ENCODE measurements at regions of chr3 and their contacts with region 1.

Region 1: DNA sequence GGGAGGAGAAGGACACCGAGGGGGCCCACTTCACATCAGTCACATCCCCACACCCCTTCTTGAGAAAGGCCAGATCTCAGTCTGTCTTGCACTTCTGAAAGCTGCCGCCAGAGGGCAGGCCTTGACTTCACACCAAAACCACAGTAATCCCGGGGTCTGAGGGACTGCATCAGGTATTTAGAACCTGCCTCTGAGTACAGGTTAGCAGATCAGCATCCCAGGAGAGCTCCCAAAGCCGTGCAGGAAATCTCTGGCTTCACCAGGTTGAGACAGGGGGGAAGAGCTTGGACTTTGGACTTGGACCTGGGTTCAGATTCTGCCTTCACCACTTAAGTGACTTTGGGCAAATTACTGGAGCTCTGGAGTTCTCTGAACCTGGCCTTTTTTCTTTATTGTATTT is 50.3 kb downstream of the LHFPL4 start:
- DNase-seq: peak; percentile 71
- ATAC-seq: peak; percentile 67
- H3K4me3 ChIP-seq: no peak overlapping the region
- H3K27ac ChIP-seq: no peak overlapping the region
- H3K4me1 ChIP-seq: peaks cover 15 to 27% of the 10 kb centered on the region in 2 experiments
- H3K27me3 ChIP-seq: no peaks in the 10 kb centered on the region
- CTCF ChIP-seq: peak; percentile 77 to 96 (median 93)
- POLR2A ChIP-seq: no peak
- RAD21 ChIP-seq: peak; percentile 93

Region 2: DNA sequence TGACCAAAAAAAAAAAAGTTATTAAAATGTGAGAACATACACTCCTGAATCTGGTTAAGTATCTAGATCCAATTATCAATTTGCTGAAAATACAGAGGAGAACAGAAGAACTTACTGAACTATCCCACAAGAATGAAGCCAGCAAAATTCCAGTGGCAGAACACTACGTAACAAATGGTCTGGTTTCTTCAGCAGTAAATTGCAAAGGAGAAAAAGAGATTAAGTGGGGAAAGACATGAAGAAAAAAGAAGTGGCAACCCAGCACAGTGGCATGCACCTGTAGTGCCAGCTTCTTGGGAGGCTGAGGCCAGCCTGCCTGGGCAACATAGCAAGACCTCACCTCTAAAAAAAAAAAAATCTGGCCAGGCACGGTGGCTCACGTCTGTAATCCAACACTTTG is 11.8 kb before region 1 on chr3:
- CTCF ChIA-PET with region 1: interaction called, 12 read pairs
- POLR2A ChIA-PET with region 1: no interaction called
- RAD21 ChIA-PET with region 1: no interaction called
- intact Hi-C with region 1: no loop called
- DNase-seq: no peak
- ATAC-seq: no peak
- H3K4me3 ChIP-seq: no peak overlapping the region
- H3K27ac ChIP-seq: no peak overlapping the region
- H3K4me1 ChIP-seq: no peaks in the 10 kb centered on the region
- H3K27me3 ChIP-seq: no peaks in the 10 kb centered on the region
- CTCF ChIP-seq: no peak
- POLR2A ChIP-seq: no peak
- RAD21 ChIP-seq: no peak

Region 3: GRCh38 chr3:9550999-9551398 is 47.7 kb after region 1 on chr3:
- CTCF ChIA-PET with region 1: no interaction called
- POLR2A ChIA-PET with region 1: no interaction called
- RAD21 ChIA-PET with region 1: no interaction called
- intact Hi-C with region 1: no loop called
- DNase-seq: no peak
- ATAC-seq: no peak
- H3K4me3 ChIP-seq: no peak overlapping the region
- H3K27ac ChIP-seq: no peak overlapping the region
- H3K4me1 ChIP-seq: no peaks in the 10 kb centered on the region
- H3K27me3 ChIP-seq: peaks cover 30% of the 10 kb centered on the region
- CTCF ChIP-seq: no peak
- POLR2A ChIP-seq: no peak
- RAD21 ChIP-seq: no peak

Region 4: GRCh38 chr3:9649791-9650521 is 146.7 kb after region 1 on chr3:
- CTCF ChIA-PET with region 1: interaction called, 3 read pairs
- POLR2A ChIA-PET with region 1: no interaction called
- RAD21 ChIA-PET with region 1: no interaction called
- intact Hi-C with region 1: loop called (anchors 10 kb)
- DNase-seq: no peak
- ATAC-seq: peak; percentile 7
- H3K4me3 ChIP-seq: peak overlapping the region; percentile 92 to 98
- H3K27ac ChIP-seq: peak overlapping the region; percentile 44; the same call in 1 of the 2 replicates
- H3K4me1 ChIP-seq: peaks cover 5 to 14% of the 10 kb centered on the region in 2 experiments; a peak in 3 of 4 replicates
- H3K27me3 ChIP-seq: no peaks in the 10 kb centered on the region
- CTCF ChIP-seq: no peak
- POLR2A ChIP-seq: no peak
- RAD21 ChIP-seq: no peak

Region 5: GRCh38 chr3:9809615-9810432 is 306.5 kb after region 1 on chr3 and contains the start of gene TTLL3:
- CTCF ChIA-PET with region 1: no interaction called
- POLR2A ChIA-PET with region 1: no interaction called
- RAD21 ChIA-PET with region 1: no interaction called
- intact Hi-C with region 1: loop called (anchors 10 kb)
- DNase-seq: no peak
- ATAC-seq: peak; percentile 74
- H3K4me3 ChIP-seq: peak within 1 kb of the TSS; percentile 35 to 54
- H3K27ac ChIP-seq: peak within 1 kb of the TSS; percentile 69
- H3K4me1 ChIP-seq: peaks cover 11 to 33% of the 10 kb centered on the region in 2 experiments; a peak in 3 of 4 replicates
- H3K27me3 ChIP-seq: no peaks in the 10 kb centered on the region
- CTCF ChIP-seq: no peak
- POLR2A ChIP-seq: no peak
- RAD21 ChIP-seq: no peak
- total RNA-seq, gene TTLL3: 40.3 TPM

Measured in HCT116 (cell line).